ENCODE measurements at regions of chr15 and their contacts with region 1.

Region 1: GRCh38 chr15:50145451-50145872 is 26.4 kb upstream of the ATP8B4 start:
- DNase-seq: peak; percentile 19
- H3K4me3 Mint-ChIP-seq: no peak overlapping the region
- H3K27ac Mint-ChIP-seq: no peak overlapping the region
- H3K4me1 Mint-ChIP-seq: peaks cover 10% of the 10 kb centered on the region
- H3K27me3 Mint-ChIP-seq: no peaks in the 10 kb centered on the region
- CTCF ChIP-seq: peak; percentile 37

Region 2: DNA sequence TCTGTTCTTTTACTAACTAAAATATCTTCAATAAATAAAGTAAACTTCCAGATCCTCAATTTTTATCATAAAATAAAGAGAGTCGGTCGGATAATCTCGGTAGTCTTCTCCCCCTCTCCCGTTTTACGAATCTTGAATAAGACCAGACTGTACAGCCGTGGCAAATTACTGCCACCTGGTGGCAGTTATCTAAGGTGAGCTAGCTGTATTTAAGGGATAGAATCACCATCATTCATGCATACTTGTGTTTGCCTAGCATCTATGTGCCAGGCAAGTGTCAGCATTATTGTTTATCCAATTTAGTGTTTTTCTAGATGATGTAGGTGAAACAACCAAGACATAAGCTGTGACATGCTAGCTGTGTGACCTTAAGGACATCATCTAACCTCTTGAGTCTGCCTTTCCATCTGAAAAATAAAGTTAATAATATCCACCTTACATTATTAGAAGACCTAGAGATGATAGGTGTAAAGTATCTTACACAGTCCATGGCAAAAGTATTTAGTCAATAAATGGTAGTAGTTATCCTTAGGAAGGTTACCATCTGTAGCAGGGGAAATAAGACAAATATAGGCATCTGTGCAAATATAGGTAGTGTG is 1792.9 kb before region 1 on chr15:
- CTCF ChIA-PET with region 1: no interaction called
- intact Hi-C with region 1: loop called (anchors 10 kb)
- DNase-seq: peak; percentile 67
- H3K4me3 Mint-ChIP-seq: no peak overlapping the region
- H3K27ac Mint-ChIP-seq: no peak overlapping the region
- H3K4me1 Mint-ChIP-seq: peaks cover 17% of the 10 kb centered on the region
- H3K27me3 Mint-ChIP-seq: no peaks in the 10 kb centered on the region
- CTCF ChIP-seq: peak; percentile 31

Region 3: GRCh38 chr15:49145651-49146609 is 999.5 kb before region 1 on chr15:
- CTCF ChIA-PET with region 1: no interaction called
- intact Hi-C with region 1: loop called (anchors 10 kb)
- DNase-seq: peak; percentile 60
- H3K4me3 Mint-ChIP-seq: peak overlapping the region; percentile 23
- H3K27ac Mint-ChIP-seq: peak overlapping the region; percentile 43
- H3K4me1 Mint-ChIP-seq: peaks cover 29% of the 10 kb centered on the region
- H3K27me3 Mint-ChIP-seq: no peaks in the 10 kb centered on the region
- CTCF ChIP-seq: peak; percentile 40

Region 4: GRCh38 chr15:49620658-49621368 is 524.6 kb before region 1 on chr15 and contains the starts of genes DTWD1 and FAM227B:
- CTCF ChIA-PET with region 1: no interaction called
- intact Hi-C with region 1: loop called (anchors 10 kb)
- DNase-seq: peak; percentile 91
- H3K4me3 Mint-ChIP-seq: peak within 1 kb of the TSS; percentile 90
- H3K27ac Mint-ChIP-seq: peak within 1 kb of the TSS; percentile 94
- H3K4me1 Mint-ChIP-seq: peaks cover 16% of the 10 kb centered on the region
- H3K27me3 Mint-ChIP-seq: no peaks in the 10 kb centered on the region
- CTCF ChIP-seq: no peak
- total RNA-seq, gene DTWD1: 21.4 and 23.1 TPM in 2 replicates
- total RNA-seq, gene FAM227B: 1.9 and 2.2 TPM in 2 replicates

Region 5: DNA sequence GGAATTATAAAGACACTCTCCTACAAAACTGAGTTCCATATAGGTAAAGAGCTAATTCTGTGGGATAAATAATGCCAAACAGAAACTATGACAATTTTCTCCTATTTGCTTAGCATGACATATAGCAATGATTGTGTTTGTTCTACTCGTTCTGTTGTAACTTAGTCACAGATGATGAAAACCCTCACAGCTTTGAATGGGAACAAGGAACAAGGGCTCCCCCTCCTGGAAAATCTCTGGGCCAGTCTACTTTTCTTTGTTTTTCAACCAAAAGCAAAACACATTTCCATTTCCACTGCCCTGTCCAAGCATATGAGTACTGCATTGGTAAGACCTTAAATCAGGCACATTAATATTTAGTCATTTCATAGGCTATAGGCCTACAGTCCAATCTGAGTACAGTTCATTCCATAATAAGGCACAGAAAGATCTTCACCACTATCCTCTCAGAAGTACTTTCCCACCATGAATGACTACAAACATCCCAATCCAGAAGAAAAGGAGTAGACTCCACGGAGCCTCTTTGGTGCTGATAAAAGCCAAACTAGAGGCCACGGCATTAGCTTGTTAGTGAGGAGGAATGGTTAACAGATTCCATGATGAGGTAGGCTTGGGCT is 93.6 kb before region 1 on chr15:
- CTCF ChIA-PET with region 1: interaction called, 3 read pairs
- intact Hi-C with region 1: loop called (anchors 5 kb)
- DNase-seq: peak; percentile 59
- H3K4me3 Mint-ChIP-seq: no peak overlapping the region
- H3K27ac Mint-ChIP-seq: no peak overlapping the region
- H3K4me1 Mint-ChIP-seq: no peaks in the 10 kb centered on the region
- H3K27me3 Mint-ChIP-seq: no peaks in the 10 kb centered on the region
- CTCF ChIP-seq: peak; percentile 55

Region 6: DNA sequence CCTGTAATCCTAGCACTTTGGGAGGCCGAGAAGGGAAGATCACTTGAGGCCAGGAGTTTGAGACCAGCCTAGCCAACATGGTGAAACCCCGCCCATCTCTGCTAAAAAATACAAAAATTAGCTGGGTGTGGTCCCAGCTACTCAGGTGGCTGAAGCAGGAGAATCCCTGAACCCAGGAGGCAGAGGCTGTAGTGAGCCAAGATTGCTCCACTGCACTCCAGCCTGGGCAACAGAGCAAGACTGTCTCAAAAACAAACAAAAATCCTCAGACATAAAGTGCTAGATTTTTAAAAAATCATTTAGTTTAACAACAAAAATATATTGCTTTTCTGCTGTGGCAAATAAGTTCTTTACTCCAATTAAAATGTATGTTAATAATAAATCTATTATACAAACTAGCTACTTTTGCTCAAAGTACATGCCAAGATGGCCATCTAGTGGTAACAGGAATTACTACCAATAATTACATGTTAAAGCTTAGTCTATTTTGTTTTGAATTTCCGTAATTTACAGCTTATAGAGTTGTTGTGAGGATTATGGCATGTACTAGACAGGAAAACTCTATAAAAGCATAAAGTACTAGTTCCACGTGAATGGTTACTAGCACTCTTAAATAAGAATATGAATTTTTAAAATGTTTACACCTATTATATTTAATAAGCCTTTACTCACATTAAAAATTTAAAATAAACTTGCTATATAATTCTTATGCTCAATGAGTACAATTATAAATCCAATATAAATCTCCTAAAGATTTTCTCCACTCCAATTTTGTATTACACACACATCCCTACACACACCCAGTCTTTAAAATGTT is 170.6 kb after region 1 on chr15:
- CTCF ChIA-PET with region 1: interaction called, 20 read pairs
- intact Hi-C with region 1: loop called (anchors 1 kb)
- DNase-seq: peak; percentile 5
- H3K4me3 Mint-ChIP-seq: no peak overlapping the region
- H3K27ac Mint-ChIP-seq: no peak overlapping the region
- H3K4me1 Mint-ChIP-seq: peaks cover 9% of the 10 kb centered on the region
- H3K27me3 Mint-ChIP-seq: no peaks in the 10 kb centered on the region
- CTCF ChIP-seq: no peak

Region 7: GRCh38 chr15:50916400-50916799 is 770.9 kb after region 1 on chr15:
- CTCF ChIA-PET with region 1: no interaction called
- intact Hi-C with region 1: no loop called
- DNase-seq: no peak
- H3K4me3 Mint-ChIP-seq: no peak overlapping the region
- H3K27ac Mint-ChIP-seq: no peak overlapping the region
- H3K4me1 Mint-ChIP-seq: no peaks in the 10 kb centered on the region
- H3K27me3 Mint-ChIP-seq: no peaks in the 10 kb centered on the region
- CTCF ChIP-seq: no peak

Measured in Calu3 (cell line).